GM10248 (cell line): ENCODE measurements at regions of chr12 and their contacts with region 1.

Region 1: GRCh38 chr12:24838531-24838950 is 110.4 kb downstream of the BCAT1 start:
- DNase-seq: peak; percentile 35
- CTCF ChIP-seq: no peak

Region 2: GRCh38 chr12:24852420-24852819 is 13.9 kb after region 1 on chr12:
- CTCF ChIA-PET with region 1: interaction called, 57 read pairs
- POLR2A ChIA-PET with region 1: interaction called, 4 read pairs
- DNase-seq: no peak
- CTCF ChIP-seq: peak; percentile 26